HepG2 (cell line): ENCODE measurements at regions of chr6 and their contacts with region 1.

Region 1: DNA sequence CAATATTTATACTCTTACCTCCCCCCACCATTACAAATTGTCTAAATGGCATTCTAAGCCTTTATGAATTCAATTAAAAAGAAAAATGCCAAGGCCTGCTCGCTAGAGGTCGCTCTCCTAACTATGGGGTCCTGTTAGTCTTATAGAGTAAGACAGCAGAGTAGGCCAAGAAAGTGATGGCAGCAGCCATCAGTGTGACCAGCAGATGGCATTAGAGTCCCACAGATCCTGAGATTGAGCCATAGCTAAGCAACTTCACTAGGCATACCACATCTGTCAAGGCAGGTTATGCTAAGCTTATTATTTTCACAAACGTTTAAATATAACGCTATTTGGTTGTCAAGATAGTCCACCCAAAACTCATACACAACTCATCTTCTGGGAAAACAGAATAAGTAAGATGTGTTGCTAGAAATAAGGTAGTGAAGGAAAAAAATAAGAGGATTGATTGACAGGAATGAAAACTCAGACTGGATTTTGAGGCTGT is 57.6 kb upstream of the SCAF8 start:
- DNase-seq: peak; percentile 95
- ATAC-seq: peak; percentile 99
- H3K4me3 ChIP-seq: no peak overlapping the region
- H3K27ac ChIP-seq: no peak overlapping the region
- H3K4me1 ChIP-seq: peaks cover 5% of the 10 kb centered on the region; the same call in 1 of the 2 replicates
- H3K27me3 ChIP-seq: no peaks in the 10 kb centered on the region
- CTCF ChIP-seq: peak; percentile 98
- EP300 ChIP-seq: no peak
- POLR2A ChIP-seq: no peak
- RAD21 ChIP-seq: peak; percentile 97

Region 2: GRCh38 chr6:154500769-154501577 is 174.7 kb before region 1 on chr6:
- CTCF ChIA-PET with region 1: interaction called, 3 read pairs
- POLR2A ChIA-PET with region 1: no interaction called
- in situ Hi-C with region 1: no loop called
- intact Hi-C with region 1: loop called (anchors 2 kb)
- DNase-seq: peak; percentile 66
- ATAC-seq: peak; percentile 85
- H3K4me3 ChIP-seq: no peak overlapping the region
- H3K27ac ChIP-seq: peak overlapping the region; percentile 19
- H3K4me1 ChIP-seq: peaks cover 75% of the 10 kb centered on the region
- H3K27me3 ChIP-seq: no peaks in the 10 kb centered on the region
- CTCF ChIP-seq: peak; percentile 79
- EP300 ChIP-seq: peak in 1 of 2 experiments; percentile 23; a peak in 1 of 4 replicates
- POLR2A ChIP-seq: no peak
- RAD21 ChIP-seq: peak; percentile 53; the same call in 1 of the 2 replicates

Region 3: GRCh38 chr6:154805288-154805911 is 129.8 kb after region 1 on chr6:
- CTCF ChIA-PET with region 1: interaction called, 63 read pairs
- POLR2A ChIA-PET with region 1: no interaction called
- in situ Hi-C with region 1: loop called (anchors 5 kb)
- intact Hi-C with region 1: loop called (anchors 1 kb)
- DNase-seq: peak; percentile 43
- ATAC-seq: peak; percentile 56; the same call in 2 of the 3 replicates
- H3K4me3 ChIP-seq: no peak overlapping the region
- H3K27ac ChIP-seq: no peak overlapping the region
- H3K4me1 ChIP-seq: peaks cover 10% of the 10 kb centered on the region; the same call in 1 of the 2 replicates
- H3K27me3 ChIP-seq: no peaks in the 10 kb centered on the region
- CTCF ChIP-seq: peak; percentile 39
- EP300 ChIP-seq: no peak
- POLR2A ChIP-seq: no peak
- RAD21 ChIP-seq: no peak

Region 4: GRCh38 chr6:154868143-154868594 is 192.5 kb after region 1 on chr6:
- CTCF ChIA-PET with region 1: interaction called, 12 read pairs
- POLR2A ChIA-PET with region 1: no interaction called
- in situ Hi-C with region 1: no loop called
- intact Hi-C with region 1: loop called (anchors 2 kb)
- DNase-seq: peak; percentile 79
- ATAC-seq: peak; percentile 41
- H3K4me3 ChIP-seq: no peak overlapping the region
- H3K27ac ChIP-seq: no peak overlapping the region
- H3K4me1 ChIP-seq: peaks cover 15% of the 10 kb centered on the region
- H3K27me3 ChIP-seq: no peaks in the 10 kb centered on the region
- CTCF ChIP-seq: peak; percentile 79
- EP300 ChIP-seq: no peak
- POLR2A ChIP-seq: no peak
- RAD21 ChIP-seq: peak; percentile 80

Region 5: DNA sequence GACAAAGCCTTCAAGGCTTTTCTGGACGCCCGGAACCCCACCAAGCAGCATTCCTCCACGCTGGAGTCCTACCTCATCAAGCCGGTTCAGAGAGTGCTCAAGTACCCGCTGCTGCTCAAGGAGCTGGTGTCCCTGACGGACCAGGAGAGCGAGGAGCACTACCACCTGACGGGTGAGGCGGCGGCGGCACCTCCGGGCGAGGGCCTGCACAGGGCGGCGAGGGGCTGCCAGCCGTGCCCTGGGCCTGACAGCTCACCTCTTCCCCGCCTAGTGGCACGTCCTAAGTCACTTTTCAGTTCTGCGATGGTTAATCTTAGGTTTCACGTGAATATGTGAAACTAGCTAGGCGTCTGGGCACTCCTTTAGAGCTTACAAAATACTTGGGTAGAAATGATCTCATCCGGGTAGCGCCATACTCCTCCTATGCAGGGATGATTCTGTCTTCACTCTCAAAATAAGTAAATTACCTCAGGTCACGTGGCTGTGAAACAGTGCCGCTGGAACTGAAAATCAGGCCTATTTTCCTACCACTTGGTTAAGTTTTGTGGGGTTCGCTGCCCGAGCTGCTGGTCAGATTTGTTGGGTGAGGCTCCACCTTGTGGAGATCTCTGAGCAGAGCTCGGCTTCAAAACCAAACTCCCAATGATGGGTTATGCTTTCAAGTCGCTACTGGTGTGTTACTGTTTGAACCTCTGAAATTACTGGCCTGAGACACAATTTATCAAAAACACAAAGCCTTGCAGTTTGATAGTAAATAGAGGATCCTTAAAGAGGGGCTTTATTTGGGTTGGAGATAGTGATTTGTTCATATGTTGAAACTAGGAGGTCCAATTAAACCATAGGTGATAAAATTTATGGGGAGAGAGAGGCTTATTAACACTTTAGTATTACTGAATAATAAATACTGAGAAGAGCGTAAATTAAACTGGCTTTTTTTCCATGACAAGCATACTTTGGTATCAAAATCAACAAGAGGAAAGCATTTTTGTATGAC is 572.7 kb after region 1 on chr6:
- CTCF ChIA-PET with region 1: no interaction called
- POLR2A ChIA-PET with region 1: no interaction called
- in situ Hi-C with region 1: no loop called
- intact Hi-C with region 1: loop called (anchors 5 kb)
- DNase-seq: peak; percentile 43
- ATAC-seq: peak; percentile 51
- H3K4me3 ChIP-seq: no peak overlapping the region
- H3K27ac ChIP-seq: no peak overlapping the region
- H3K4me1 ChIP-seq: peaks cover 8% of the 10 kb centered on the region; the same call in 1 of the 2 replicates
- H3K27me3 ChIP-seq: no peaks in the 10 kb centered on the region
- CTCF ChIP-seq: peak; percentile 61
- EP300 ChIP-seq: no peak
- POLR2A ChIP-seq: peak in 1 of 2 experiments; percentile 57; a peak in 2 of 4 replicates
- RAD21 ChIP-seq: no peak